ENCODE measurements at regions of chr1 and their contacts with region 1.

Region 1: DNA sequence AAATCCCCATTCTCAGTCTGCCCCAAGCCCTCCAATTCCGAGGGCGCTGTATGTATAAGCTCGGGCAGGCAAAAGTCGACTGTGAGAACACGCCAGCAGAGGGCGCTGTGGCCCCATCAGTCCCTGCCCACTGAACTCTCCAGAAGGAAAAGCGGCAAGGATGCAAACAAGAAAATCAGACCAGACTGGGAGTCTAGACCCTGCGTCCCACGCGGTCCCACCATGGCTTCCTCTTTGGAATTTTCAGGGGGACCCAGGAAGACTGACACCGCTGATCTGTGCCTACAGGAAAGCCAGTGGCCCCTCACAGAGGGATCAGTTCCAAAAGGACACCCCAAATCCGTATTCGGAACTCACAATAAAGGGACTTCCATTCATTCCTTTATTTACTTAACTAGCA is 19.5 kb downstream of the TEX35 start:
- DNase-seq: peak; percentile 76 to 91 (median 82)
- ATAC-seq: peak in 3 of 4 donors; percentile 55 to 68 (median 60)
- H3K4me3 ChIP-seq: peak overlapping the region in 1 of 12 donors; percentile 2
- H3K27ac ChIP-seq: peak overlapping the region in 2 of 12 donors; percentile 13 to 41
- H3K4me1 ChIP-seq: peaks cover 0 to 23% (median 9%) of the 10 kb centered on the region in 12 donors
- H3K27me3 ChIP-seq: no peaks in the 10 kb centered on the region
- CTCF ChIP-seq: peak; percentile 78 to 95 (median 90)
- POLR2A ChIP-seq: no peak

Region 2: GRCh38 chr1:178749581-178750166 is 217.3 kb after region 1 on chr1:
- intact Hi-C with region 1: loop called in 1 of 10 experiments (anchors 2 kb)
- DNase-seq: no peak
- ATAC-seq: no peak
- H3K4me3 ChIP-seq: no peak overlapping the region
- H3K27ac ChIP-seq: no peak overlapping the region
- H3K4me1 ChIP-seq: peaks cover 0 to 5% (median 0%) of the 10 kb centered on the region in 12 donors
- H3K27me3 ChIP-seq: no peaks in the 10 kb centered on the region
- CTCF ChIP-seq: no peak
- POLR2A ChIP-seq: no peak

Region 3: GRCh38 chr1:179091691-179092165 is 559.3 kb after region 1 on chr1:
- intact Hi-C with region 1: no loop called
- DNase-seq: peak in 4 of 5 donors; percentile 29 to 86 (median 50)
- ATAC-seq: peak; percentile 54 to 82 (median 77)
- H3K4me3 ChIP-seq: no peak overlapping the region
- H3K27ac ChIP-seq: peak overlapping the region in 11 of 12 donors; percentile 51 to 81 (median 57)
- H3K4me1 ChIP-seq: peaks cover 0 to 49% (median 28%) of the 10 kb centered on the region in 12 donors
- H3K27me3 ChIP-seq: no peaks in the 10 kb centered on the region
- CTCF ChIP-seq: no peak
- POLR2A ChIP-seq: no peak

Measured in heart left ventricle (tissue), 16 donors.